Heart right ventricle (tissue), 16 donors: ENCODE measurements at regions of chr16 and their contacts with region 1.

Region 1: DNA sequence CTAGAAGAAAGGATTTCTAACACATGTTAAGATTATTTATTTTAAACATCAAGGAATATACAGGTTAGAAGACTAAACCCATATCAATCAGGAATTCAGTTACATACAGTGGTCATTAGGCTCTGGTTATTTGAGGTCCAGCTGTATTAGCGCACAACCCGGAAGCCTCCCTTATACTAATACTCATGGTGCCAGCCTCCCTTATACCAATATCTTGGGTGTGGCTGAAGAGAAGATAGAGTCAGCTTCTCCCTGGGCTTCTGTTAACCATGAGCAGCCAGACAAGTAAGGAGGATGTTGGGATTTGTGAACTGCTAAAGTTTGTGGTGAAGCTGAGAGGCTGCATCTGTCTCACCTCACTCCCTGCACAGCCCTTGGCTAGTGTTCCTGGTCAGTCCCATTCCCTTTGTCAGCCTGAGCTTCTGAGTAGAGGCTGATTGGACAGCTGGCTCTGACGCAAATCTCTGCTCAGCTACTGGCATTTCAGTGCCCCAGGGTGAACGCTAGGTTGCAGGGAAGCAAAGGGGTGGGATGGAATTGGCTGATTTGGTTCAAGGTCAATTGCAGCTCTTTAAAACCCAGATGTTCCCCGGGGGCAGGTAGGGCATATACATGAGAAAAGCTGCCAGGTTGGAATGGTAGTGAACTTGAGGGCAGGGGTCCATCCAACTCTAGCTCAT is 23.0 kb upstream of the CNOT1 start:
- DNase-seq: no peak
- ATAC-seq: peak in 6 of 8 donors; percentile 61 to 91 (median 80)
- H3K4me3 ChIP-seq: no peak overlapping the region
- H3K27ac ChIP-seq: no peak overlapping the region
- H3K4me1 ChIP-seq: peaks cover 0 to 3% (median 0%) of the 10 kb centered on the region in 9 donors
- H3K27me3 ChIP-seq: no peaks in the 10 kb centered on the region
- CTCF ChIP-seq: no peak

Region 2: DNA sequence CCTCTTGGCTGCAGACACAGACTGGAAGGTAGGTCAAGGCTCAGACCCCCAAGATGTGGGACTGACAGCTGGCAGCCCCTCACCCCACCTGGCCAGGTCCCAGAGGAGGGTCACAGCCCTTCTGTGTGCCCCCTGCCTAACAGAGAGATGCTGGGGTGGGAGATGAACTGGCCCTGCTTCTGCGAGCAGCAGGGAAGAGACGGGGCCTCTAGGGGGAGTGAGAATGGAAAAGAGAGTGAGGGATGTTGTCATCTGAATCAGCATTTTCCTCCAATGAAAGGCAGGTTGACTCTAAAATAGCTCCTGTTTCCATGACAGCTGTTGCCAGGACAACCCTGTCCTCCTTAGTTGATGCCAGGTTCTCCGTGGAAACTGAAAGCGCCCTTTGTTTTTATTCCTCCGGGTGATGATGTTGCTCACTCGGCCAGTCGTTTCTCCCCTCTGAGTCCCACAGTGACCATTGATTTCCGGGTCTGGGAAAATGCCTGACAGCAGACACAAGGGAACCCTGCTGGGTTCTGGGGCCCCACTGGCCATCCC is 157.6 kb before region 1 on chr16:
- intact Hi-C with region 1: loop called in 1 of 10 experiments (anchors 10 kb)
- DNase-seq: peak; percentile 53 to 95
- ATAC-seq: peak; percentile 48 to 83 (median 72)
- H3K4me3 ChIP-seq: peak overlapping the region in 7 of 10 donors; percentile 6 to 31 (median 13)
- H3K27ac ChIP-seq: peak overlapping the region; percentile 66 to 86 (median 80)
- H3K4me1 ChIP-seq: peaks cover 11 to 68% (median 30%) of the 10 kb centered on the region in 9 donors
- H3K27me3 ChIP-seq: peaks cover 0 to 11% (median 0%) of the 10 kb centered on the region in 7 donors
- CTCF ChIP-seq: peak in 8 of 9 donors; percentile 22 to 69 (median 56)